ENCODE measurements at regions of chr11 and their contacts with region 1.

Region 1: GRCh38 chr11:66545701-66546367 is at the start of gene ZDHHC24:
- DNase-seq: peak; percentile 95
- ATAC-seq: peak; percentile 94
- H3K4me3 Mint-ChIP-seq: peak within 1 kb of the TSS; percentile 76
- H3K27ac Mint-ChIP-seq: peak within 1 kb of the TSS; percentile 67
- H3K4me1 Mint-ChIP-seq: peaks cover 20% of the 10 kb centered on the region
- H3K27me3 Mint-ChIP-seq: peaks cover 5% of the 10 kb centered on the region
- total RNA-seq, gene ZDHHC24: 9.7 to 11.3 TPM

Region 2: DNA sequence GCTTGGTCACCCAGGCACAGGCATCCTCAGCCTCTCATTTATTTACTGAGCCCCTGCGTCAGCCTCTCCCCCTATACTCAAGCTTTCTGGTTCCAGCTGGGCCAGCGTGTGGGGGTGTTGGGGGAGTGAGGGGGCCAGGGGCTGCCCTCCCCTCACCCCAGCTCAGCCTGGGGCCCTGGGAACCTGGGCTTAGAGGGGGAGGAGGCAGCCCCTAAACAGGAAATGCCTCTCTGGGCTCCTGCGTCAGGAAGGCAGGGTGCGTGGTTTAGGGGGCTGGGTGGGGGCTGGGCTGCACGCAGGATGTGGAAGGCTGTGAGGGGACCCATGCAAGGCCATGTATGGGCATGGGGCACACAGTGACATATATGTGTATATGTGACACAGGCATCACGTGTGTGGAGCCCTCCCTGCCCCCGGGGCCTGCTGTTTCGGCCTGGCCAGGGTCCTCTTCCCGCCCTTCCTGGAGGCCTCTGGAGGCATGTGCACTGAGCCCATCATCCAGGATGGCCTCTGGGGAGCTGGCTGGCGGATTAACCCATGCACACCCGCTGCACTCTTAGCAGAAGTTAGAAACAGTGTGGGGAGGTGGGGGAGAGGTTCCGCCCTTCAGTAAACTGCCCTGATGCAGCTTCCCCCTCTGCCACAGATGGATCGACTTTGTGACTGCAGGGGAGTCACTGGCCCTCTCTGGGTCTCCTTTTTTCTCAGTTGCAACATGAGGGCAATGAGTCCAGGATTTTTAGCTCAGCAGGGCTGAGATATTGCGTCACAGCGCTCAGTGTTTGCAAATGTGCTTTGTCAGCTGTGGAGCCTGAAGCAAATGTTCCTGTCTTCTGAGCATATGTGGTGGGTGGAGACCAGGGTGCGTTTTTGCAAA is 227.9 kb before region 1 on chr11:
- CTCF ChIA-PET with region 1: no interaction called
- POLR2A ChIA-PET with region 1: no interaction called
- intact Hi-C with region 1: no loop called
- DNase-seq: peak; percentile 70
- ATAC-seq: peak; percentile 77
- H3K4me3 Mint-ChIP-seq: peak overlapping the region; percentile 47
- H3K27ac Mint-ChIP-seq: peak overlapping the region; percentile 92
- H3K4me1 Mint-ChIP-seq: peaks cover 54% of the 10 kb centered on the region
- H3K27me3 Mint-ChIP-seq: no peaks in the 10 kb centered on the region

Region 3: GRCh38 chr11:66498506-66498905 is 47.3 kb before region 1 on chr11:
- CTCF ChIA-PET with region 1: no interaction called
- POLR2A ChIA-PET with region 1: no interaction called
- intact Hi-C with region 1: no loop called
- DNase-seq: no peak
- ATAC-seq: no peak
- H3K4me3 Mint-ChIP-seq: no peak overlapping the region
- H3K27ac Mint-ChIP-seq: no peak overlapping the region
- H3K4me1 Mint-ChIP-seq: no peaks in the 10 kb centered on the region
- H3K27me3 Mint-ChIP-seq: no peaks in the 10 kb centered on the region

Region 4: DNA sequence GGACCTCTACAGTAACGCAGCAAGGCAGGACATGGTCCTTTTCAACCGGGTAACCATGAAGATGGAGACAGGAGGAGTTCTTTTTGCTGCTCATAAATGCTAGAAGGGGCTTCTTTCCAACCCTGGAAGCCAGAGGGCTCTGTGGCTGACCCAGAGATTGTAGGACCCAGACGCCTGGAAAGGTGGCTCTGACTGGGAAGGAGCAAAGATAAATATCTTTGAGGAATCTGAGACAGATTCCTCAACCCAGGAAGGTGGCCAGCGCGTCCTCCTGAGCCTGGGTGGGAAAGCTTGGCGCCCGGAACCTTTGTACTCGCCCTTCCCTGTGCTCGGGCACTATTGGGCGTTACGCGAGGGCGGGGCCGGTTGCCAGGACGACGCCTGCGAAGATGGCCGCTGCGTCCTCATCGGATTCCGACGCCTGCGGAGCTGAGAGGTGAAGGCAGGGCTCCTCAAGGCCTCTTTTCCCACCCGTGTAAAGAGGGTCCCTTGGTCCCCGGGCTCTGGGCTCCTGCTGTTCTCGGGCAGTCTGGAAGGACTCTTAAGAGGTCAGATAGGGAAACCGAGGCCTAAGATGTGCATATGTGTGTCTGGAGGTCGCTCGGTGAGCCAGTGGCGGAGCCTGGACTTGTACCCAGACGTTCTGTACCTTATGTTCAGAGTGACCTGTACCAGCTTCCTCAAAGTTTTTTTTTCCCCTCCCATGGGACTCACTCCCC is 35.4 kb before region 1 on chr11 and contains the start of gene BBS1:
- CTCF ChIA-PET with region 1: interaction called, 3 read pairs
- POLR2A ChIA-PET with region 1: no interaction called
- intact Hi-C with region 1: loop called in 1 of 2 experiments (anchors 1 kb)
- DNase-seq: peak; percentile 88
- ATAC-seq: peak; percentile 98
- H3K4me3 Mint-ChIP-seq: peak within 1 kb of the TSS; percentile 86
- H3K27ac Mint-ChIP-seq: peak within 1 kb of the TSS; percentile 48
- H3K4me1 Mint-ChIP-seq: peaks cover 10% of the 10 kb centered on the region
- H3K27me3 Mint-ChIP-seq: no peaks in the 10 kb centered on the region
- total RNA-seq, gene BBS1: 9.4 to 10.7 TPM